ENCODE measurements at regions of chr19 and their contacts with region 1.

Region 1: DNA sequence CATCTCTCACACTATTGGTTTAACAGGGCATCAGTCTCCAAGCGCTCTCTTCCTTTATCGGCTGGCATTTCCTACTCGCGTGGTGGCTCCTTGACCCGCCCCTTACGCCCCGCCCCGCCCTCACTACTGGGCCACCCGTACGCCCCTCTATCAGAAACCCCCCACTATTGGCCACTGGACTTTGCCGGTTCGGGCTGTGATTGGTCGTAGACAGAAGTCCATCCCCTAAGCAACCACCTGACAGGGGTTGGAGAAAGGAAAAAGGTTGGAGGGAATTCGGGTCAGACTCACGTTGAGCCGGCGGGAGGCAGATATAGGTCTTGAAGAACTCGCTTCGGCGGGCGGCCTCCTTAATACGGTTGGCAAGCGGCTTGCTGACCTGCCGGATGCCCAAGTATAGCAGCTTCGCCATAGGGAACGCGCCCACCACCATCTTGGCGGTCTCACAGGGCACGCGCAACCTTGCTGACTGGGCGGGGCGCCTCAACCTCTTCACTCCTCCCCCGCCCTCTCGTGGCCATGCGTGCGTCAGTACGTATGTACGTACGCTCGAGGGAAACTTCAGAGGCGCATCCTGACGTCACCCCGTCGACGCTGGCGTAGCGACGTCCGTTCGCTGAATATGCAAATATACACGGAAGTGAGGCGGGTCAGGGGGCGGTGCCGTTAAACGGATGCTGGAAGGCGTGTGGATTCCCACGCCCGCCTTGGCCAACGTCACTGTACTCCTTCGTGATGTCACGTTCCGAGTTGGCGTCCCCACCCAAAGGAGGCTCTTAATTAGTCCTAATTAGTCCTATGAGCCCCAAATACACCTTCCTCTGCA is at the start of gene OPA3:
- DNase-seq: peak; percentile 100
- ATAC-seq: peak; percentile 95
- H3K4me3 Mint-ChIP-seq: peak within 1 kb of the TSS; percentile 87
- H3K27ac Mint-ChIP-seq: peak within 1 kb of the TSS; percentile 93
- H3K4me1 Mint-ChIP-seq: peaks cover 22% of the 10 kb centered on the region
- H3K27me3 Mint-ChIP-seq: peaks cover 2% of the 10 kb centered on the region
- total RNA-seq, gene OPA3: 13.8 to 14.4 TPM

Region 2: DNA sequence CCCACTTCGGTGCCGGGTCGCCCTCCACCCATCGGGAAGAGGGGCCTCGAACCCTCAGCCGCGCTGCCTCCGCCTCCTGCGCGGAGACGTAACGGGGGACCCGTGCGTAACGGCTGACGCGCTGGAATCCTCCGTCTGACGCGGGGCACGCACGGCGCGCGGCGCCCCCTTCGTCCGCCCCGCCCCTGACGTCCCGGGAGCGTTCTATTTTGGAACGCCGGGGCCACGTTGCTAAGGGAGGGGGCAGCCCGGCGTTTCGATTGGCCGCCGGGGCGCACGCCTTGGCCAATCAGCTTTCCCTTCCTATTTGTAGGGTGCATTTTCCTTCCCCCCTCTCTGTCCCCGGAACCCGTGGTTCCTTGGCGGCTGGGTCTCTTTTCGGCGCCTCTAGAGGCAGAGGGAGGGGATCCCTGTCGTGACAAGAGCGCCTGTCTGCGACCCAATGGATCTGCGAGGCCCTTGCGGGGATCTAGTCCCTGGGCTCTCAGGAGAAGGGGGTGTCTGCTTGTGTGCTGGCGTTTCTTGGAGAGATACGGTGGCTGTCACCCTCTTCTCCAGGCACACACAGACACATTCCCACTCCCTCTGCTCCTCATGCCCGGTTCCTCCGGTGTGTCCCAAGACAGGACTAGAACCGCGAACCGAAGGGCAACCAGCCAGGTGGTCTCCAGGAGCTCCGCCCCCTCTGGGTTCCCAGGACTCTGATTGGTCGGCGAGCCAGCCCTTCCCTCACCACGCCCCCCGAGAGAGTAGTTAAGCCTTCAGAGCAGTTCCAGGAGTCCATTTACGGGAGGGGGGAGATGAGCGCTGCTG is 115.2 kb before region 1 on chr19:
- CTCF ChIA-PET with region 1: no interaction called
- POLR2A ChIA-PET with region 1: no interaction called
- intact Hi-C with region 1: loop called in 1 of 2 experiments (anchors 1 kb)
- DNase-seq: peak; percentile 97
- ATAC-seq: peak; percentile 82
- H3K4me3 Mint-ChIP-seq: peak overlapping the region; percentile 78
- H3K27ac Mint-ChIP-seq: peak overlapping the region; percentile 86
- H3K4me1 Mint-ChIP-seq: peaks cover 29% of the 10 kb centered on the region
- H3K27me3 Mint-ChIP-seq: peaks cover 11% of the 10 kb centered on the region

Region 3: GRCh38 chr19:45506246-45506990 is 78.1 kb before region 1 on chr19:
- CTCF ChIA-PET with region 1: no interaction called
- POLR2A ChIA-PET with region 1: no interaction called
- intact Hi-C with region 1: loop called (anchors 1 to 2 kb)
- DNase-seq: peak; percentile 100
- ATAC-seq: peak; percentile 80
- H3K4me3 Mint-ChIP-seq: peak overlapping the region; percentile 85
- H3K27ac Mint-ChIP-seq: peak overlapping the region; percentile 96
- H3K4me1 Mint-ChIP-seq: peaks cover 38% of the 10 kb centered on the region
- H3K27me3 Mint-ChIP-seq: no peaks in the 10 kb centered on the region

Region 4: GRCh38 chr19:45632468-45633196 is 48.1 kb after region 1 on chr19:
- CTCF ChIA-PET with region 1: no interaction called
- POLR2A ChIA-PET with region 1: interaction called, 3 read pairs
- intact Hi-C with region 1: loop called in 1 of 2 experiments (anchors 1 kb)
- DNase-seq: peak; percentile 79
- ATAC-seq: peak; percentile 54
- H3K4me3 Mint-ChIP-seq: no peak overlapping the region
- H3K27ac Mint-ChIP-seq: peak overlapping the region; percentile 60
- H3K4me1 Mint-ChIP-seq: peaks cover 19% of the 10 kb centered on the region
- H3K27me3 Mint-ChIP-seq: no peaks in the 10 kb centered on the region

Region 5: DNA sequence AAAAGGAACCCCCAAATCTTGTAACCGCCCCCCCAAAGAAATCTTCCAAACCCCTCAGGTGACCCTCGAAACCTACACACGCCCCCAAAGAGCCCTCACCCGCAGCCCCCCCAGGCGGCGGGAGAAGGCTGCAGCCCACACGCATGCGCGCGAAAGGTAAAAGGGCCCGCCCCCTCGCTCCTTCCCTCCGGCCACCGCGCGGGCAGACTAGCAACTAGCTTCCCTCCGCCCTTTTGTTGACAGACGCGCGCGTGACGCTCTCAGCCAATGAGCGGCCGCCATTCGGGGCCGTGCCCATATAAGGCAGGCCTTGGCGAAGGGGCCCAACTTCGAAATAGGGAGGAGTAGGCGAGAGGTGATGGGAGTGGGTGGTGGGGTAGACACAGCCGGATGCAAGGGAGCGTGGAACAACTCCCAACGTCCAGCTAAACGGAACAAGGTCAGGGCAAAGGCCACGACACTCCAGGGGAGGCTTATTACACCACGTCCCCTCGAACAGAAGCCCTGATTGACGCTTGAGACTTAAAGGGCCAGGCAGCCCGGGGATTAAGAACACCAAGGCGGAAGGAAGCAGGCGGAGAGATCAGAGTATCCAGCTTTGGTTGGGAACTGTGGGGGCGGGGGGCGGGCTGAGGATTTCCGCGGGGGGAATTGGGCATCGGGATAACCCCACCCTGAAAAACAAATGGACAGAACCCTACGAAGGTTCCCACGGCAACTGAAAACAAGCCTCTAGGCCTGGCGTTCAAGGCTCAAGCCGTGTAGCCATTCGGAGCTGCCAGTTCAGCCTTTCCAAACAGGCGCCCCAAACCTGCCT is 132.8 kb after region 1 on chr19:
- CTCF ChIA-PET with region 1: no interaction called
- POLR2A ChIA-PET with region 1: interaction called, 9 read pairs
- intact Hi-C with region 1: loop called (anchors 1 kb)
- DNase-seq: peak; percentile 99
- ATAC-seq: peak; percentile 97
- H3K4me3 Mint-ChIP-seq: peak overlapping the region; percentile 93
- H3K27ac Mint-ChIP-seq: peak overlapping the region; percentile 94
- H3K4me1 Mint-ChIP-seq: peaks cover 40% of the 10 kb centered on the region
- H3K27me3 Mint-ChIP-seq: no peaks in the 10 kb centered on the region

Region 6: DNA sequence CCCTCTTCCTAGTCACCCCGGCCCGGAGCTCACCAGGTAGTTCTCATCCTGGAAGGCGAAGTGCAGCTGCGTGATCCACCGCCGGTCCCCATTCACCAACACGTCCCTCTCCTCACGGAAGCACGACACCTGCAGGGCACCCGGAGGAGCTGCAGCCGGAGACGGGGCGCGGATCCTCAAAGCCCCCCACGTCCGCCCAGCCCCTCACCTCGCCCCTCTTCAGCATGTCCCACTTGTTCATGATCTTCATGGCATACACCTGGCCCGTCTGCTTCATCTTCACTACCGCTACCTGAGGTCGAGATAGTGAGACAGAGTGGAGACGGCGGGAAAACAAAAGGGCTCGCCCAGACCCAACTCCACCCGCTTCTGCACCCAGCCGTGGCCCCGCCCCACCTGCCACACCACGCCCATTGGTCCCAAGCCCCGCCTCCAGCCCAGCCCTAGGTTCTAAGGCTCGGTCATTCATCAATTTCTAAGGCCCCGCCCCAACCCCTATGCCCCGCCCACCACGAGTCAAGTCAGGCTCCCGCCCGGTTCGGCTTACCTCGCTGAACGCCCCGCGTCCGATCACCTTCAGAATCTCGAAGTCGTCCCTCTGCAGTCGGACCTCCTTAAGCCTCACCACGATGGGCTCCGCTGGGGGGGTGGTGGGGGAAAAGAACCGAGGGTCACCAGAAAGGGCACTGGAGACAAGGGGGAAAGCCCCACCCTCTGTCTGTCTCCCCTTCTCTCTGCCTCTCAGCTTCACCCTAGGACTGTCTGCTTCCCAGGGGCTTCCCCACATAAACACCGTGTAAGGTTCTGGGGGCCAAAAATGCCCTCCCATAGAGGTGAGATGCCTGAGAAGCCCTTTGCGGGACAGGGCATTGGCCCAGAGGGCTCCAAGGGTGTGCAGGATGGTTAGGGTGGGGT is 194.9 kb after region 1 on chr19:
- CTCF ChIA-PET with region 1: no interaction called
- POLR2A ChIA-PET with region 1: no interaction called
- intact Hi-C with region 1: loop called in 1 of 2 experiments (anchors 1 kb)
- DNase-seq: peak; percentile 97
- ATAC-seq: peak; percentile 99
- H3K4me3 Mint-ChIP-seq: peak overlapping the region; percentile 47
- H3K27ac Mint-ChIP-seq: no peak overlapping the region
- H3K4me1 Mint-ChIP-seq: peaks cover 16% of the 10 kb centered on the region
- H3K27me3 Mint-ChIP-seq: peaks cover 9% of the 10 kb centered on the region

Region 7: GRCh38 chr19:45902651-45903625 is 318.4 kb after region 1 on chr19:
- CTCF ChIA-PET with region 1: no interaction called
- POLR2A ChIA-PET with region 1: no interaction called
- intact Hi-C with region 1: loop called in 1 of 2 experiments (anchors 1 kb)
- DNase-seq: peak; percentile 100
- ATAC-seq: peak; percentile 88
- H3K4me3 Mint-ChIP-seq: peak overlapping the region; percentile 88
- H3K27ac Mint-ChIP-seq: peak overlapping the region; percentile 75
- H3K4me1 Mint-ChIP-seq: peaks cover 16% of the 10 kb centered on the region
- H3K27me3 Mint-ChIP-seq: no peaks in the 10 kb centered on the region